A673 (cell line): ENCODE measurements at regions of chr9 and their contacts with region 1.

Region 1: GRCh38 chr9:13330396-13331004 is 51.0 kb upstream of the MPDZ start:
- DNase-seq: no peak
- H3K4me3 ChIP-seq: no peak overlapping the region
- H3K27ac ChIP-seq: no peak overlapping the region
- H3K4me1 ChIP-seq: no peaks in the 10 kb centered on the region
- H3K27me3 ChIP-seq: no peaks in the 10 kb centered on the region
- CTCF ChIP-seq: no peak

Region 2: DNA sequence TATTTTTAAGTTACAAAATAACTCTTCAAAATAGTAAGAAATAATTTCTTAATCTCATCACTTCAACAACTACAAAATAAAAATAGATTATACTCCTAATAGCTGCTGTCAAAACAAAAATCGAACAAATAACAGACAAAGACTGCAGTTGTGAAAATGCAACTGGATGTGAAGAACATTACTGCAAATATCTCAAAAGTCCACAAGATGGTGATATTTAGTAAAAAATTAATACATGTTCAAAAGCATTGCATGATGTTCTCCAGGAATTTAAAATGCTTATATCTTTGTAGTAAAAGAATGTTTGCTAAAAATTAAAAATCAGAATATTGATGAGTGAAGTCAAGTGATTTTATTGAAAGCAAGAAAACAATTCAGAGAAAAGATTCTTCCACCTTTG is 117.2 kb before region 1 on chr9:
- CTCF ChIA-PET with region 1: no interaction called
- POLR2A ChIA-PET with region 1: no interaction called
- intact Hi-C with region 1: loop called (anchors 10 kb)
- DNase-seq: peak; percentile 44
- H3K4me3 ChIP-seq: no peak overlapping the region
- H3K27ac ChIP-seq: no peak overlapping the region
- H3K4me1 ChIP-seq: no peaks in the 10 kb centered on the region
- H3K27me3 ChIP-seq: no peaks in the 10 kb centered on the region
- CTCF ChIP-seq: peak; percentile 61